ENCODE measurements at regions of chr10 and their contacts with region 1.

Region 1: GRCh38 chr10:125976960-125977603 is 80.7 kb downstream of the FANK1 start:
- DNase-seq: no peak
- H3K4me3 ChIP-seq: no peak overlapping the region
- H3K27ac ChIP-seq: no peak overlapping the region
- H3K4me1 ChIP-seq: peaks cover 0 to 4% of the 10 kb centered on the region in 2 experiments; a peak in 1 of 4 replicates
- H3K27me3 ChIP-seq: no peaks in the 10 kb centered on the region
- CTCF ChIP-seq: no peak
- EP300 ChIP-seq: no peak
- RAD21 ChIP-seq: no peak

Region 2: DNA sequence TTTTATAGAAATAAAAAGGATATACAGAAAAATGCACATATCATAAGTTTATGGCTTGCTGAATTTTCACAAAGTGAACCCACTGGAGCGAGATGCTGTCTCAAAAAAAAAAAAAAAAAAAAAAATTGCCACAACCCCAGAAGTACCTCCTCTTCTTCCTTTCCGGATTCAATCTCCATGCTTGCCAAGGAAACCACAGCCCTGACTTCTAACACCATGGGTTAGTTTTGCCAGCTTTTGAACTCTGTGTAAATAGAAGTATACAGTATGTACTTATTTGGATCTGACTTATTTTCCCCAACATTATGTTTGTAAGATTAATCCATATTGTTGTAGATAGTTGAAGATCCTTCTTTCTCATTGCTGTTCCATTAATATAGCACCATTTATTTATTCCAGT is 40.8 kb before region 1 on chr10:
- CTCF ChIA-PET with region 1: interaction called, 10 read pairs
- POLR2A ChIA-PET with region 1: no interaction called
- DNase-seq: no peak
- H3K4me3 ChIP-seq: no peak overlapping the region
- H3K27ac ChIP-seq: no peak overlapping the region
- H3K4me1 ChIP-seq: peaks cover 0 to 7% of the 10 kb centered on the region in 2 experiments; a peak in 1 of 4 replicates
- H3K27me3 ChIP-seq: no peaks in the 10 kb centered on the region
- CTCF ChIP-seq: no peak
- EP300 ChIP-seq: no peak
- RAD21 ChIP-seq: no peak

Measured in SK-N-SH (cell line).